ENCODE measurements at regions of chr19 and their contacts with region 1.

Region 1: DNA sequence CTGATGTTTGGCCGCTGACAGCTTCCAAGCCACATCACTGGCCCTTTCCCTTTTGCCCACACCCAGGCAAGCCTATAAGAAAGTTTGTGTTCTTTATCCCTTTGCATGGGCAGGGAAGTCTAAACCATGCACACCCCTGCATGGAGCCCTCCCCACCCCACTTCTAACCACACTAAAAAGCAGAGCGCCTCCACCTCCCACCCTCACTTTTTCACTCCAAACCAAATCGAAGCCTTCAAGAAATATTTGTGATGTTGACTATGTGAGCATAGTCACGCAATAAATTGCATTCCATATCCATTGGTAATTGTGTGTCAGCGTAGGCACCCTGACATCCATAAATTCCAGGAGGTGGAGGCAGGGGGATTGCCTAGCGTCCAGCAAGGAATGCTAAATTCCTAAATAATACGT is 104.4 kb upstream of the LSM14A start:
- DNase-seq: no peak
- ATAC-seq: no peak
- H3K4me3 ChIP-seq: no peak overlapping the region
- H3K27ac ChIP-seq: no peak overlapping the region
- H3K4me1 ChIP-seq: no peaks in the 10 kb centered on the region
- H3K27me3 ChIP-seq: peaks cover 0 to 66% (median 46%) of the 10 kb centered on the region in 7 donors
- CTCF ChIP-seq: no peak

Region 2: GRCh38 chr19:33785795-33786194 is 282.1 kb before region 1 on chr19:
- intact Hi-C with region 1: loop called in 1 of 10 experiments (anchors 5 kb)
- DNase-seq: no peak
- ATAC-seq: no peak
- H3K4me3 ChIP-seq: no peak overlapping the region
- H3K27ac ChIP-seq: no peak overlapping the region
- H3K4me1 ChIP-seq: peaks cover 0 to 3% (median 0%) of the 10 kb centered on the region in 9 donors
- H3K27me3 ChIP-seq: peaks cover 0 to 32% (median 14%) of the 10 kb centered on the region in 7 donors
- CTCF ChIP-seq: no peak

Region 3: DNA sequence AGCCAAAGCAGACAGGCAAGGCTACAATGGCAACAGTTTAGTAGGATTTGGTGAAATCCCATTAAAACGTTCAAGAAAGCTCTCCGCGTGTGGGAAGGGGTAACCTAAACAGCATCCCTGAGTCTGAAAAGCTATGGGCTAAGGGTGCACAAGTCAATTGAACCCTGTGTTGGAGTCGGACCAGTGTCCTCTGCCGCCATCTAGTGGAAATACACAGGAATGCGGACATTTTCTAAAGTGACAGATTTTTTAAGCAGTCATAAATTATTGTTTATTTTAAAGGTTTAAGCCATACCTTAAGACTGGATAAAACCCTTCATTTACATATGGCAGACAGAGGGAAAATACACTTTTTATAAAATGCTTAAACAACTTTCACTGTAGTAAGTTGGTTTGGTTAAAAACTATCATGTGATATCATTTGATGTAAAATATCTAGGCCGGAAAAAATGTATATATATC is 77.9 kb after region 1 on chr19:
- intact Hi-C with region 1: no loop called
- DNase-seq: peak in 1 of 2 donors; percentile 46
- ATAC-seq: peak in 4 of 8 donors; percentile 27 to 56 (median 41)
- H3K4me3 ChIP-seq: no peak overlapping the region
- H3K27ac ChIP-seq: no peak overlapping the region
- H3K4me1 ChIP-seq: no peaks in the 10 kb centered on the region
- H3K27me3 ChIP-seq: peaks cover 0 to 3% (median 0%) of the 10 kb centered on the region in 7 donors
- CTCF ChIP-seq: peak; percentile 68 to 88 (median 80)

Region 4: GRCh38 chr19:34232566-34233481 is 165.0 kb after region 1 on chr19:
- intact Hi-C with region 1: no loop called
- DNase-seq: peak; percentile 54 to 57
- ATAC-seq: peak; percentile 30 to 81 (median 72)
- H3K4me3 ChIP-seq: no peak overlapping the region
- H3K27ac ChIP-seq: peak overlapping the region in 8 of 10 donors; percentile 9 to 75 (median 48)
- H3K4me1 ChIP-seq: peaks cover 4 to 31% (median 18%) of the 10 kb centered on the region in 9 donors
- H3K27me3 ChIP-seq: no peaks in the 10 kb centered on the region
- CTCF ChIP-seq: no peak

Measured in heart right ventricle (tissue), 16 donors.